ENCODE measurements at regions of chr10 and their contacts with region 1.

Region 1: DNA sequence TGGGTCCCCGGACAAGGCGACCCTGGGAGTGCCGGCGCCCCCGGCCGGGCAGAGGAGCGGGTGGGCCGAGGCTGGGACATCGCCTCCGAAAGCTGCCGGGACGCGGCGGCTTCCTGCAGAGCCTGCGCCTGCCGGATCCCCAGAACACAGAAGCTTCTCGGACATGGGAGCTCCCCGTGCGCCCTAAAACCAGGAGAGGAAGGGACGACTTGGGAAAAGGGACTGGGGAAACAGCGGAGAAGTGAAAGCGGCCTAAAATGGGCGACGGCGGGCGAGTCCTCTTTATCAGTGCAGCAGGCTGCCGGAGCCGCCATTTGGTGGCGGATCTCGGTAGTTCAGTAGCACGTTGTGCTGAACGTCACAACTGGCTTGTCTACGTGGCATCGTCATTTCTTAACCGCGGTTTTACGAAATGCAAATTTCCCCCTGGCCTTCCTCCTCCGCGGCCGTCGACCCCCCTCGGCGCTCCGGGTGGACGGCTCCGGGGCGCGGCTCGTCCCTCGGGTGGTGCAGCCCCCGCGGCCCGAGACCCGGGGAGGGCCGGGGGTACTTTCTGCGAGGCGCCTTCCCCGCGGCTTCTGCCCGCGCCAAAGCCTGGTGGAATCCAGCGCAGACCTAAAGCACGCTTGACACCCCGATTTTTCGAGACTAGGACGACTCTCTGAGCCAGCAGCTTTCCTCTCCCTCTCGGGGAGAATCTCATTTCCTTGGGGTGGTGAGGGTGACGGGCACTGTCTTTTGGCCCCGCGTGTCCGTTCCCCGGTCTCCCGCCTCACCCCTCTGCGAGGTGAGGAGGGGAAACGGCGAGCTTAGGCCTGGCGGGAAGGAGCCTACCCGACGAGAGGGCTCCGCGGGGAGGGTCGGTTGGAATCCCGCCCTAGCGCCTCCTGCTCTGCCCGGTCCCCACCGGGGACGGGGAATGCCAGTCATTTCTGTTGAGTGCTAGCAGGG is 9.8 kb upstream of the SPAG6 start:
- DNase-seq: peak in 13 of 14 experiments; percentile 46 to 93 (median 67)
- ATAC-seq: peak; percentile 87
- H3K4me3 ChIP-seq: peak overlapping the region; percentile 52
- H3K4me3 Mint-ChIP-seq: peak overlapping the region; percentile 93
- H3K27ac ChIP-seq: peak overlapping the region in 1 of 2 donors; percentile 30
- H3K27ac Mint-ChIP-seq: peak overlapping the region; percentile 96
- H3K4me1 ChIP-seq: peaks cover 46% of the 10 kb centered on the region
- H3K4me1 Mint-ChIP-seq: peaks cover 48% of the 10 kb centered on the region
- H3K27me3 ChIP-seq: peaks cover 35 to 65% of the 10 kb centered on the region in 2 experiments
- H3K27me3 Mint-ChIP-seq: peaks cover 67% of the 10 kb centered on the region
- CTCF ChIP-seq: no peak

Region 2: GRCh38 chr10:22259280-22259679 is 76.2 kb before region 1 on chr10:
- CTCF ChIA-PET with region 1: no interaction called
- POLR2A ChIA-PET with region 1: interaction called, 10 read pairs
- intact Hi-C with region 1: loop called in 1 of 2 experiments (anchors 5 kb)
- DNase-seq: peak in 5 of 14 experiments; percentile 4 to 54 (median 37)
- ATAC-seq: peak; percentile 60
- H3K4me3 ChIP-seq: no peak overlapping the region
- H3K4me3 Mint-ChIP-seq: no peak overlapping the region
- H3K27ac ChIP-seq: no peak overlapping the region
- H3K27ac Mint-ChIP-seq: no peak overlapping the region
- H3K4me1 ChIP-seq: no peaks in the 10 kb centered on the region
- H3K4me1 Mint-ChIP-seq: peaks cover 38% of the 10 kb centered on the region
- H3K27me3 ChIP-seq: no peaks in the 10 kb centered on the region
- H3K27me3 Mint-ChIP-seq: peaks cover 34% of the 10 kb centered on the region
- CTCF ChIP-seq: no peak

Measured in CD4-positive, alpha-beta T cell (primary cell).